HepG2 (cell line): ENCODE measurements at regions of chr18 and their contacts with region 1.

Region 1: DNA sequence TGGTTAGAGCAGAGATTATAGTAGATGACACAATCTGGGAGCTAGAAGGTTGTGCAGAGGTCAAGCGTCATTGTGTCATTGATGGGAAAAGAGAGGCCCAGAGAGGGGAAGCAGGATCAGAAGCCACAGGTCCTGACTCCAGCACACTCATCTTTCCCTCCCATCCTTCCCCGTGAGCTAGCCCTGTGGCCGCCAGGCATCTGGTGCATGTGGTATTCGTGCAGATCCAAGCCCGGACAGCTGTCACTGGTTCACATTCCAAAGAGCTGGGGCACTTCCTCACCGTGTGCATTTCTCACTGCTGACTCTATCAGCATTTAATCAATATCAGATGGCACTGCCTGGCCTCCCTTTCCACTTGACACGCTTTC is 94.1 kb upstream of the THOC1 start:
- DNase-seq: peak; percentile 89
- ATAC-seq: peak; percentile 96
- H3K4me3 ChIP-seq: peak overlapping the region; percentile 27 to 57 (median 32); a peak in 4 of 6 replicates
- H3K27ac ChIP-seq: peak overlapping the region; percentile 94
- H3K4me1 ChIP-seq: peaks cover 50% of the 10 kb centered on the region
- H3K27me3 ChIP-seq: no peaks in the 10 kb centered on the region
- CTCF ChIP-seq: no peak
- EP300 ChIP-seq: peak; percentile 31 to 62; a peak in 2 of 4 replicates
- POLR2A ChIP-seq: no peak; a peak in 1 of 4 replicates
- RAD21 ChIP-seq: no peak

Region 2: GRCh38 chr18:350953-351572 is 10.9 kb before region 1 on chr18:
- CTCF ChIA-PET with region 1: no interaction called
- POLR2A ChIA-PET with region 1: interaction called, 10 read pairs
- in situ Hi-C with region 1: no loop called
- intact Hi-C with region 1: no loop called
- DNase-seq: no peak
- ATAC-seq: no peak
- H3K4me3 ChIP-seq: no peak overlapping the region
- H3K27ac ChIP-seq: no peak overlapping the region
- H3K4me1 ChIP-seq: peaks cover 38% of the 10 kb centered on the region
- H3K27me3 ChIP-seq: no peaks in the 10 kb centered on the region; a peak in 1 of 5 replicates
- CTCF ChIP-seq: no peak
- EP300 ChIP-seq: no peak
- POLR2A ChIP-seq: no peak
- RAD21 ChIP-seq: no peak